ENCODE measurements at regions of chr2 and their contacts with region 1.

Region 1: DNA sequence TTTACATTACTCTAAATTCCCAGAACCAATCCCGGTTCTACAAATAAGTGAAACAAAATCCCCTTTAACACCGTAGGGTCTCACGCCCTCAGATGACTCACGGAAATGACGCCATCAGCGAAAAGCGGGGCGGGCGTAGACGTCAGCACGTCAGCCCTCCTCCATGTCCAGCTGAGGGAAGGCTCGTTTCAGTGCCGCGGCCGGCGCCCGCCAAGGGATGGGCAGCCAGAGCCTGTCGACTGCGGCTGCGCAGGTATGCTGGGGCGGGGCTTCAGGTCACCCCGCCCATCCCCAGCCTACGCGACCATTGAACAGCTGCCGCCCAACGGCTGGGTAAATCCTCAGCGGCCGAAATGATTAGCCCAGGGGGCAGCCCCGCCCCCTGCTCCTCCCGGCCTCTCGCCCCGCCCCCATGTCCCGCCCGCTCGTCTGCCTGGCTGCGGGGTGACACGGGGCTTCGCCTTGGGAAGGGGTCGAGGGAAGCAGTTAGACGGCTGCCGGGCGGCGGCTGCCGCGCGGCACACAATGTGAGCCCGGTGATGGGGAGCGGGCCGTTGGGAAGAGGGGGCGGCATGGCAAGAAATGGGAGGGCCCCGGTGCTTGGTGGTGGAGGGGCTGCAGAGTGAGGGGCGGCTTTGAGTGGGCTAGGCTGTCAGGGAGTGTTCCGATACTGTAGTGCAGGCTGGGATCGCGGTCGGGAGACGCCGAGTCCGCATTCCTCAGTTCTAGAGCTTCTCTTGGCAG is at the start of gene NBEAL1:
- DNase-seq: peak; percentile 96 to 100 (median 99)

Region 2: GRCh38 chr2:202634556-202635427 is 379.8 kb before region 1 on chr2 and contains the start of gene FAM117B:
- intact Hi-C with region 1: loop called (anchors 5 kb)
- DNase-seq: peak; percentile 93 to 100 (median 98)

Region 3: GRCh38 chr2:202911512-202912341 is 102.9 kb before region 1 on chr2 and contains the starts of genes CARF and WDR12:
- intact Hi-C with region 1: loop called (anchors 5 kb)
- DNase-seq: peak; percentile 88 to 98 (median 92)

Region 4: GRCh38 chr2:203077448-203077847 is 62.8 kb after region 1 on chr2:
- intact Hi-C with region 1: no loop called
- DNase-seq: no peak

Measured in posterior cingulate gyrus (tissue), 11 donors.